Dorsolateral prefrontal cortex (tissue), 120 donors: ENCODE measurements at regions of chr16 and their contacts with region 1.

Region 1: GRCh38 chr16:66315210-66315825 is 51.2 kb upstream of the CDH5 start:
- DNase-seq: peak in 8 of 10 donors; percentile 32 to 76 (median 60)
- H3K4me3 ChIP-seq: no peak overlapping the region
- H3K27ac ChIP-seq: no peak overlapping the region
- H3K27me3 ChIP-seq: no peaks in the 10 kb centered on the region
- CTCF ChIP-seq: peak; percentile 79 to 98 (median 96)

Region 2: DNA sequence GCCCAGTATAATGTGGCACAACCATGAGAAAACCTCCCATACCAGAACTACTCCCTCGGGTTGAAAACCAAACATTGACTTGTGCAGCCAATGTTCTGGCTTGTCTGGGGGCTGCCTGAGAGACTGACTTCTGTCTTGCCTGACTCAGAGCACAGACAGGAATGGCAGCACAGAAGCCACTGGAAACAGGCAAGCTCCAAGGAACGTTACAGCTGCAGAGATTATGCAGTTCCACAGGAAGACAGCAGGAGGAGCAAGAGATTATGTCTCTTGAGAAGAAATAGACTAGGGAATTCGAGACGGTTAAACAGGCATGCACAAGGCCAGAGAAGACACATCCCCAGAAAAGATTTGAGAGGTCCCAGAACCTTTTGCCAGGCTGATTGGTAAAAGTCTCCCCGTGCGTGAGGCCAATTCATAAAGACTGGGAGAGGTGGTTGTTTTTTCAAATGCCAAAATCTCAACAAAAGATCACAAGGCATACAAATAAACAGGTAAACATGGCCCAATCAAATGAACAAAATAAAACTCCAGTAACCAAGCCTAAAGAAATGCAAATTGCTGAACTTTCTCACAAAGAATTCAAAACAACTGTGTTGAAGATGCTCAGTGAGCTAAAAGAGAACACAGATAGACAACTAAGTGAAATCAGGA is 39.4 kb before region 1 on chr16:
- intact Hi-C with region 1: loop called in 1 of 2 experiments (anchors 2 kb)
- DNase-seq: peak in 2 of 10 donors; percentile 8 to 16
- H3K4me3 ChIP-seq: no peak overlapping the region
- H3K27ac ChIP-seq: no peak overlapping the region
- H3K27me3 ChIP-seq: no peaks in the 10 kb centered on the region
- CTCF ChIP-seq: peak in 53 of 56 donors; percentile 24 to 72 (median 50)

Region 3: GRCh38 chr16:66366433-66367299 is 51.3 kb after region 1 on chr16 and contains the start of gene CDH5:
- intact Hi-C with region 1: no loop called
- DNase-seq: peak in 1 of 10 donors; percentile 57
- H3K4me3 ChIP-seq: peak within 1 kb of the TSS in 51 of 59 donors; percentile 4 to 58 (median 32)
- H3K27ac ChIP-seq: peak within 1 kb of the TSS in 42 of 59 donors; percentile 4 to 81 (median 60)
- H3K27me3 ChIP-seq: peaks cover 0 to 12% (median 0%) of the 10 kb centered on the region in 45 donors
- CTCF ChIP-seq: no peak
- total RNA-seq, gene CDH5: 5.7 to 36.2 (median 14.9) TPM

Region 4: DNA sequence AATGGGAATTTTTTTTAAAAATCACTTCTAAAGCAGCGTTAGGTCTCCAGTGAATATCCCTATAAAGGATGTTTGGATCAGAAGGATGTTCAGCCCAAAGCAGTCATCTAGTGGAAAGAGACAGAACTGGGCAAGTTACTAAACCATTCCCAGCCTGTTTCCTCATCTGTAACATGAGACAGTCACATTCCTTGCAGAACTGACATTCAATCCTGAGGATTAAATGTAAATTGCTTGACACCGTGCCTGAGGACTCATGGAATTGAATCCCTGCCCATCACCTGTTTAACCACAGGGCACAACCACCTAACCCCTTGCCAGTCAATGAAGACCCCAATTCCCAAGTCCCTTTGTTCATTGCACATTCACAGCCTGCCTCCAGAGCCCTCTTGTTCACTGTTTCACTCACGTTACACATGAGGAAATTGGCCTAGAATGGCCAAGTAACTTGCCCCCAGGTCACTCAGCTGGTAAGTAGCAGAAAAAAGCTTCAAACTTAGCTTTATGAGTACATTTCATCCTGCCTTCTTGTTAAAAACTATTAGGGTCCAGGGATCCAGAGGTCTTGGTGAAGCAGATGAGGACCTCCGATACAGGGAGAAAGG is 265.4 kb after region 1 on chr16:
- intact Hi-C with region 1: no loop called
- DNase-seq: no peak
- H3K4me3 ChIP-seq: no peak overlapping the region
- H3K27ac ChIP-seq: peak overlapping the region in 5 of 59 donors; percentile 8 to 41 (median 27)
- H3K27me3 ChIP-seq: peaks cover 0 to 5% (median 0%) of the 10 kb centered on the region in 45 donors
- CTCF ChIP-seq: no peak